ENCODE measurements at regions of chr1 and their contacts with region 1.

Region 1: GRCh38 chr1:18597160-18598042 is 33.2 kb upstream of the PAX7 start:
- DNase-seq: peak in 1 of 2 donors; percentile 86
- ATAC-seq: peak; percentile 82
- H3K4me3 ChIP-seq: no peak overlapping the region
- H3K27ac ChIP-seq: no peak overlapping the region
- H3K4me1 ChIP-seq: no peaks in the 10 kb centered on the region
- H3K27me3 ChIP-seq: no peaks in the 10 kb centered on the region

Region 2: DNA sequence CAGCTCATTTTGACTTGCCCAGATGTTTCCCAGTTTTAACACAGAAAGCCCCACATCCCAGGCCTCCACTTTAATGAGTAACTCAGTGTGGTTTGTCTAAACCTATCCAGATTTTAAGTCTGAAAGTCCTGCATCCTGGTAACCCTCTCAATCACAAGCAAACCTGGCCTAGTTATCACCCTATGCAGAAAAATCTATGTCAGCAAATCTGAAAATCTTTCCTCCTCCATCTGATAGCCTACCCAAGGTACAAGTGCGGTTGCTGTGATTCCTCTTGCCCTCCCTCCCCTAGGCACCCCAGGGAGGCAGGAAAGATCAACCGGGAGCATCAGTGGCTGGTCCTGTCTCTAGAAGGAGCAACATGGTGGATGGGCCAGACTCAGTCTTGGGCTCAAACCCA is 326.1 kb before region 1 on chr1:
- intact Hi-C with region 1: no loop called
- DNase-seq: no peak
- ATAC-seq: no peak
- H3K4me3 ChIP-seq: no peak overlapping the region
- H3K27ac ChIP-seq: no peak overlapping the region
- H3K4me1 ChIP-seq: no peaks in the 10 kb centered on the region
- H3K27me3 ChIP-seq: no peaks in the 10 kb centered on the region

Region 3: GRCh38 chr1:18352636-18353265 is 244.7 kb before region 1 on chr1:
- intact Hi-C with region 1: no loop called
- DNase-seq: no peak
- ATAC-seq: no peak
- H3K4me3 ChIP-seq: no peak overlapping the region
- H3K27ac ChIP-seq: no peak overlapping the region
- H3K4me1 ChIP-seq: no peaks in the 10 kb centered on the region
- H3K27me3 ChIP-seq: no peaks in the 10 kb centered on the region

Region 4: GRCh38 chr1:18530587-18531502 is 66.6 kb before region 1 on chr1:
- intact Hi-C with region 1: no loop called
- DNase-seq: no peak
- ATAC-seq: no peak
- H3K4me3 ChIP-seq: no peak overlapping the region
- H3K27ac ChIP-seq: no peak overlapping the region
- H3K4me1 ChIP-seq: no peaks in the 10 kb centered on the region
- H3K27me3 ChIP-seq: no peaks in the 10 kb centered on the region

Region 5: DNA sequence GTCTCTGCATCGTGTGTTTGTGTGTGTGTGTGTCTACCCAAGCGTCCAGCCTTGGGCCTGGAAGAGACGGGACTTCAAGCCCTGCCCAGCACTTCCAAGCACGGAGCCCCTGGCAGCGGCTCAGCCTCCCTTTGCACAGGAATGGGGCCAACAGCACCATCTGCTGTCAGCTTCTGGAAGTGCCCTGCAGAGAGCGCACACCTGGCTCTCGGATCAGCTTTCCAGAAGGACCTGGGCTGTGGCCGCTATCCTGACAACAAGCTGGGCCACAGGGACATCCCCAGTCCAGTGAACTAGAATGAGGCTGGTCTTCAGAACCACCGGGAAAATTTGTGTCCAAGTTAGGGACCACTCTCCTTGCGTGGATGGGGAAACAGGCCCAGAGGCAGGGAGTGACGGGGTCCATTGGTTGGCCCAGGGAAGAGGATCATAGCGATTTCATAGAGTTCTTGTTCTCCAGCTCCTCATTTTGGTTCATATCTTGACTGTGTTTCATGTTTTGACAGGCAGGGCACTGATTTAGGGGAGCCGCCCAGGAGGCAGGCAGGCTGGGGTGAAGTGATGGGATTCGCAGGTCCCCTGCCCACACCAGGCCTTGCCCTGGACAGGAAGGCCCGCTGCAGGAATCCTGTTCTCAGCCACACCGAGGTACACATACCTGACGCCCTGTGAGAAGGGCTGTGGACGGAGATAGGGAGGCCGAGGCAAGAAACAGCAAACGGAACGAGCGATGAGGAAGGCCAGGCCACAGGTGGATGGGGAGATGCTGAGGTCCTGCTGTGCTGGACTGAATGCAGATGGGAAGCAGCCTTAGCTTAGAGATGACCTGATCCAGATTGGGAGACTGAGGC is 223.6 kb after region 1 on chr1:
- intact Hi-C with region 1: loop called (anchors 1 to 5 kb)
- DNase-seq: peak; percentile 69 to 88
- ATAC-seq: peak; percentile 70
- H3K4me3 ChIP-seq: no peak overlapping the region
- H3K27ac ChIP-seq: no peak overlapping the region
- H3K4me1 ChIP-seq: no peaks in the 10 kb centered on the region
- H3K27me3 ChIP-seq: no peaks in the 10 kb centered on the region

Region 6: DNA sequence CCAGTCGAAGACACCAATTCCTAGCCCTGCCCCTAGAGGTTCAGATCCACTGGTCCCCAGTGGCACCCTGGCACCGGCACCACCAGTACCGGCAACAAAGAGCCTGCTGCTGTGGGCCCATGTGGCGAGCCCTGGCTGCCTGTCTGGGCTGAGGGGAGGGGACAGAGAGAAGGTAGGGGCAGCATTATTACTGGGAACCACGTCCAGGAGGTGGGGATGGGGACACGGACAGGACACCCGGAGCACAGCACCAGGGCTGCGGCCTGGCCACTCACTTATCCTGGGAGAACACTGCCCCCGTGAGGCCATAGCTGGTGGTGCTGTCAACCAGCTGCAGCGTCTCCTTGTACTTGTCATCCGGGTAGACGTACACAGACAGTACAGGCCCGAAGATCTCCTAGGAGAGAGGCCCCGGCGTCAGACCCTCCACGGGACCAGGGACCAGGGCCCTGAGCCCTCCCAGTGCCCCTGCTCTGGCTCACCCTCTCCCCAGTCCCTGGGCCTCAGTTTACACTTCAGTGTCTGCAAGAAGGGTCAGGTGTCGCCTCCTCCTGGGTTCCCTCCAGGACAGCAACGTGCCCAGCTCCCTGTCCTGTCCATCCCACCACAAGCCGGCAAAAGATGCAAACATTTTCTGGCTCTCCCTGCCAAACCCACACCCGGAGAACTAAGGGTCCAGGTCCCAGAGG is 277.9 kb after region 1 on chr1:
- intact Hi-C with region 1: loop called (anchors 5 kb)
- DNase-seq: peak; percentile 86 to 93
- ATAC-seq: peak; percentile 76
- H3K4me3 ChIP-seq: no peak overlapping the region
- H3K27ac ChIP-seq: no peak overlapping the region
- H3K4me1 ChIP-seq: no peaks in the 10 kb centered on the region
- H3K27me3 ChIP-seq: no peaks in the 10 kb centered on the region